ENCODE measurements at regions of chr11 and their contacts with region 1.

Region 1: GRCh38 chr11:119629085-119629484 is 99.9 kb downstream of the NECTIN1 start:
- DNase-seq: no peak
- ATAC-seq: no peak
- H3K4me3 Mint-ChIP-seq: no peak overlapping the region
- H3K27ac Mint-ChIP-seq: no peak overlapping the region
- H3K4me1 Mint-ChIP-seq: no peaks in the 10 kb centered on the region
- H3K27me3 Mint-ChIP-seq: peaks cover 4% of the 10 kb centered on the region
- CTCF ChIP-seq: no peak

Region 2: GRCh38 chr11:119641983-119642745 is 13.1 kb after region 1 on chr11:
- CTCF ChIA-PET with region 1: interaction called, 10 read pairs
- POLR2A ChIA-PET with region 1: no interaction called
- intact Hi-C with region 1: no loop called
- DNase-seq: peak; percentile 20
- ATAC-seq: peak; percentile 42
- H3K4me3 Mint-ChIP-seq: no peak overlapping the region
- H3K27ac Mint-ChIP-seq: no peak overlapping the region
- H3K4me1 Mint-ChIP-seq: no peaks in the 10 kb centered on the region
- H3K27me3 Mint-ChIP-seq: no peaks in the 10 kb centered on the region
- CTCF ChIP-seq: peak; percentile 71